CD4-positive, alpha-beta T cell (primary cell): ENCODE measurements at regions of chr5 and their contacts with region 1.

Region 1: GRCh38 chr5:35926389-35927051 is 11.9 kb downstream of the CAPSL start:
- DNase-seq: peak in 13 of 14 experiments; percentile 30 to 85 (median 51)
- ATAC-seq: peak; percentile 44
- H3K4me3 ChIP-seq: no peak overlapping the region
- H3K4me3 Mint-ChIP-seq: peak overlapping the region; percentile 80
- H3K27ac ChIP-seq: no peak overlapping the region
- H3K27ac Mint-ChIP-seq: no peak overlapping the region
- H3K4me1 ChIP-seq: peaks cover 22% of the 10 kb centered on the region
- H3K4me1 Mint-ChIP-seq: peaks cover 43% of the 10 kb centered on the region
- H3K27me3 ChIP-seq: no peaks in the 10 kb centered on the region
- H3K27me3 Mint-ChIP-seq: no peaks in the 10 kb centered on the region
- CTCF ChIP-seq: peak; percentile 96

Region 2: DNA sequence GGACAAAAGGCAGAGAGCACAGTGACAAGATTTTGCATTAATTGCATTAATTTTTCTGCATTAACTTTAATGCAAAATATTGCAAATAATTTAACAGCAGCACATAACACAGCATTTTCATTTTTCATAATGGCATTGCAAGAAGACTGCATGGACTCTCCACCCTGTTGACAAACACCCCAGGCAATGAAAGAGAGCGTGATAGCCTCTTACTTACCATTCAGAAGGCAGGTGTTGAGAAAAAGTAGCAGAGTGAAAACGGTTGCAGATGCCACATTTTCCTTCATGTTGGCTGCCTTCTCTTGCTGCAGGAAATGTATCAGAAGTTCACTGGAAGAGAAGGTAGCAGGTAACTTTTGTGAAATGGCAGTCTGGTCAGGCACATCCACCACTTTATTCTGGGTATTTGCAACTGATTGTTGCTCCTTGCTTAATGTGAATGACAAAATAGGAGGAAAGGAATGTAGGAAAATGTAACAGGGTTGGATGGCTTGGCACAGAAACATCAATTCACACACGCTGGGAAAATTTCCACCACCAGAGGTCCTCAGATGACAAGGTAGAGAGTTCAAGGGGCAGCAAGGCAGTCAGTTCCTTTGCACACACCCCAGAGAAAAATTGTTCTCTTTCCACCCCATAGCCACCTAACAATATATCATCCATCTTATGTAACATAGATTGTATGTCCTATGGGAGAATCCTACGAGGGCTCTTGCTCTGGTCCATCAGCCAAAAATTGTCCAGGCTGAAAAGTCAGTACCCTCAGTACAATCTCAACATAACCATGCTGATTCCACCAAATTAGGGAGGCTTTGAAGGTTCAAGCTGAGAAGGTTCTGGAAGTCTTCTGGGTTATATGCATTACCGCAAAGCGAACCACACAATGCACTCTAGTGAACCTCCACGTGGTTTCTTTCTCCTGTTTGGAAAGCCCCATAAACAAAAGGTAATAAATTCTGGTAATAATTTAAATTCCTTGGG is 836.9 kb before region 1 on chr5:
- CTCF ChIA-PET with region 1: interaction called, 7 read pairs
- POLR2A ChIA-PET with region 1: no interaction called
- intact Hi-C with region 1: loop called (anchors 1 kb)
- DNase-seq: peak; percentile 25 to 69 (median 40)
- ATAC-seq: peak; percentile 52
- H3K4me3 ChIP-seq: no peak overlapping the region
- H3K4me3 Mint-ChIP-seq: no peak overlapping the region
- H3K27ac ChIP-seq: no peak overlapping the region
- H3K27ac Mint-ChIP-seq: no peak overlapping the region
- H3K4me1 ChIP-seq: no peaks in the 10 kb centered on the region
- H3K4me1 Mint-ChIP-seq: no peaks in the 10 kb centered on the region
- H3K27me3 ChIP-seq: peaks cover 0 to 7% of the 10 kb centered on the region in 2 experiments
- H3K27me3 Mint-ChIP-seq: peaks cover 5% of the 10 kb centered on the region
- CTCF ChIP-seq: peak; percentile 66

Region 3: GRCh38 chr5:35617435-35618303 is 308.9 kb before region 1 on chr5 and contains the start of gene SPEF2:
- CTCF ChIA-PET with region 1: interaction called, 32 read pairs
- POLR2A ChIA-PET with region 1: interaction called, 9 read pairs
- intact Hi-C with region 1: loop called (anchors 1 kb)
- DNase-seq: peak; percentile 55 to 90 (median 68)
- ATAC-seq: peak; percentile 84
- H3K4me3 ChIP-seq: peak within 1 kb of the TSS; percentile 79
- H3K4me3 Mint-ChIP-seq: peak within 1 kb of the TSS; percentile 93
- H3K27ac ChIP-seq: peak within 1 kb of the TSS; percentile 11 to 27
- H3K27ac Mint-ChIP-seq: peak within 1 kb of the TSS; percentile 88
- H3K4me1 ChIP-seq: peaks cover 15% of the 10 kb centered on the region
- H3K4me1 Mint-ChIP-seq: peaks cover 33% of the 10 kb centered on the region
- H3K27me3 ChIP-seq: no peaks in the 10 kb centered on the region
- H3K27me3 Mint-ChIP-seq: no peaks in the 10 kb centered on the region
- CTCF ChIP-seq: peak; percentile 76
- total RNA-seq, gene SPEF2: 3.2 TPM

Region 4: DNA sequence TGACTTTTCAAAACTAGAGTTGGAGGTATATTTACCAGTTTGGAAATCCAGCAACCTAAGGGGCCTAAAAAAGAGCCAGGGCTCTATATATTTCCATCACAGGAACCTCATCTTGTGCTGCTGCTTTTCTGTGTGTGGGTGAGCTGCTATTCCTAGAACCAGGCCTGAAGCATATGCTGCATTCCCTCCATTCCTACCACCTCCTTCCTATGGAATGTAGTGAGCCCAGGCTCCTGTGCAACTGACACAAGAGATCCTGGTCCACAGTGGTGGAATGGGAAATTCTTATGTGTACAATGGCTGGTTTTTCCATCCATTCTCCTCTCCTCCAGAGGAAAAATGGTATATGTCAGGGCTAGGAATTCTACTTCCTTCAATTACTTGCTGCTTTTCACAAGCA is 269.8 kb before region 1 on chr5:
- CTCF ChIA-PET with region 1: interaction called, 143 read pairs
- POLR2A ChIA-PET with region 1: interaction called, 31 read pairs
- intact Hi-C with region 1: loop called (anchors 1 kb)
- DNase-seq: no peak
- ATAC-seq: no peak
- H3K4me3 ChIP-seq: no peak overlapping the region
- H3K4me3 Mint-ChIP-seq: no peak overlapping the region
- H3K27ac ChIP-seq: no peak overlapping the region
- H3K27ac Mint-ChIP-seq: no peak overlapping the region
- H3K4me1 ChIP-seq: no peaks in the 10 kb centered on the region
- H3K4me1 Mint-ChIP-seq: peaks cover 31% of the 10 kb centered on the region
- H3K27me3 ChIP-seq: no peaks in the 10 kb centered on the region
- H3K27me3 Mint-ChIP-seq: no peaks in the 10 kb centered on the region
- CTCF ChIP-seq: no peak

Region 5: GRCh38 chr5:35857606-35858205 is 68.8 kb before region 1 on chr5:
- CTCF ChIA-PET with region 1: interaction called, 39 read pairs
- POLR2A ChIA-PET with region 1: interaction called, 16 read pairs
- intact Hi-C with region 1: loop called in 1 of 2 experiments (anchors 2 kb)
- DNase-seq: peak in 2 of 14 experiments; percentile 49 to 53
- ATAC-seq: no peak
- H3K4me3 ChIP-seq: peak overlapping the region; percentile 88
- H3K4me3 Mint-ChIP-seq: peak overlapping the region; percentile 93
- H3K27ac ChIP-seq: peak overlapping the region; percentile 97 to 98
- H3K27ac Mint-ChIP-seq: peak overlapping the region; percentile 99
- H3K4me1 ChIP-seq: peaks cover 31% of the 10 kb centered on the region
- H3K4me1 Mint-ChIP-seq: peaks cover 73% of the 10 kb centered on the region
- H3K27me3 ChIP-seq: no peaks in the 10 kb centered on the region
- H3K27me3 Mint-ChIP-seq: no peaks in the 10 kb centered on the region
- CTCF ChIP-seq: no peak

Region 6: GRCh38 chr5:36029914-36030313 is 103.4 kb after region 1 on chr5:
- CTCF ChIA-PET with region 1: no interaction called
- POLR2A ChIA-PET with region 1: no interaction called
- intact Hi-C with region 1: no loop called
- DNase-seq: no peak
- ATAC-seq: no peak
- H3K4me3 ChIP-seq: no peak overlapping the region
- H3K4me3 Mint-ChIP-seq: no peak overlapping the region
- H3K27ac ChIP-seq: no peak overlapping the region
- H3K27ac Mint-ChIP-seq: no peak overlapping the region
- H3K4me1 ChIP-seq: no peaks in the 10 kb centered on the region
- H3K4me1 Mint-ChIP-seq: no peaks in the 10 kb centered on the region
- H3K27me3 ChIP-seq: no peaks in the 10 kb centered on the region
- H3K27me3 Mint-ChIP-seq: peaks cover 17% of the 10 kb centered on the region
- CTCF ChIP-seq: no peak